CD4-positive, alpha-beta T cell (primary cell): ENCODE measurements at regions of chr14 and their contacts with region 1.

Region 1: DNA sequence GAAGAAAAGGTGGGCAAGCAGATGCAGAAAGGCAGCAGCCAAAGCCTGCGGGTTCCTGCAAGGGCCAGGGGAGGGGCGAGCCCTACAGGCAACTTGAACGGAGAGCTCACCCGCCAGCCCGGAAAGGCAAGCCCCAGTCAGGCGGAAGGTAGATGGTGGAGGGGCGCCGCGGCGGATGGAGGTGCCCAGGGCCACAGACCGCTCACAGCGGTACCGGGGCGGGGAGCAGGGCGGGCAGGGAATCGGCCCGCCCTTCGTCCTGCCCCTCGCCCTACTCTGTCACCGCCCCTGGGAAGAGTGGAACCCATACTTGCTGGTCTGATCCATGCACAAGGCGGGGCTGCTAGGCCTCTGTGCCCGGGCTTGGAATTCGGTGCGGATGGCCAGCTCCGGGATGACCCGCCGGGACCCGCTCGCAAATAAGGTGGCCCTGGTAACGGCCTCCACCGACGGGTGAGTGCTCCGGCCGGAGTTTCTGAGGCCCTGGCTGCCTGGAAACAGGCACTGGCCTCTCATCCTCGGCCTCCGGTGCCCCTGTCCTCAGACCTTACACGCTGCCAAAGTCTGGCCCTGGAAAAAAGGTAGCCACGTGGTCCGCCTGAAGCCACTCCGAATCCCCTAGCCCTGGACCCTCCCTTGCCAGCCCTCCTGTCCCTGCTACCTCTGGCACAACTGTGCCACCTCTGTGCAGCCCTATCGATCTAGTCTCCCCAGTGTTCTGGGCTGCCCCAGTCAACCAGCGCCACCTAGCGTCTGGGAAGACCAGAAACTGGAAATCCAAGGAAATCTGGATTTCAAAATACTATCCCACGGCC is at the start of gene DHRS4:
- DNase-seq: peak; percentile 67 to 92 (median 78)
- ATAC-seq: peak; percentile 91
- H3K4me3 ChIP-seq: peak within 1 kb of the TSS; percentile 84
- H3K4me3 Mint-ChIP-seq: peak within 1 kb of the TSS; percentile 96
- H3K27ac ChIP-seq: peak within 1 kb of the TSS; percentile 54 to 63
- H3K27ac Mint-ChIP-seq: peak within 1 kb of the TSS; percentile 79
- H3K4me1 ChIP-seq: peaks cover 25% of the 10 kb centered on the region
- H3K4me1 Mint-ChIP-seq: peaks cover 32% of the 10 kb centered on the region
- H3K27me3 ChIP-seq: no peaks in the 10 kb centered on the region
- H3K27me3 Mint-ChIP-seq: no peaks in the 10 kb centered on the region
- CTCF ChIP-seq: peak; percentile 93
- total RNA-seq, gene DHRS4: 6.6 to 6.7 TPM

Region 2: GRCh38 chr14:23665375-23666192 is 288.1 kb before region 1 on chr14:
- CTCF ChIA-PET with region 1: no interaction called
- POLR2A ChIA-PET with region 1: no interaction called
- intact Hi-C with region 1: loop called in 1 of 2 experiments (anchors 10 kb)
- DNase-seq: peak in 5 of 14 experiments; percentile 1 to 43 (median 33)
- ATAC-seq: no peak
- H3K4me3 ChIP-seq: no peak overlapping the region
- H3K4me3 Mint-ChIP-seq: no peak overlapping the region
- H3K27ac ChIP-seq: no peak overlapping the region
- H3K27ac Mint-ChIP-seq: no peak overlapping the region
- H3K4me1 ChIP-seq: peaks cover 6% of the 10 kb centered on the region
- H3K4me1 Mint-ChIP-seq: no peaks in the 10 kb centered on the region
- H3K27me3 ChIP-seq: no peaks in the 10 kb centered on the region
- H3K27me3 Mint-ChIP-seq: peaks cover 5% of the 10 kb centered on the region
- CTCF ChIP-seq: peak; percentile 33

Region 3: GRCh38 chr14:24013654-24014514 is 60.2 kb after region 1 on chr14:
- CTCF ChIA-PET with region 1: no interaction called
- POLR2A ChIA-PET with region 1: no interaction called
- intact Hi-C with region 1: loop called in 1 of 2 experiments (anchors 10 kb)
- DNase-seq: peak in 12 of 14 experiments; percentile 9 to 85 (median 32)
- ATAC-seq: peak; percentile 98
- H3K4me3 ChIP-seq: no peak overlapping the region
- H3K4me3 Mint-ChIP-seq: no peak overlapping the region
- H3K27ac ChIP-seq: no peak overlapping the region
- H3K27ac Mint-ChIP-seq: no peak overlapping the region
- H3K4me1 ChIP-seq: peaks cover 11% of the 10 kb centered on the region
- H3K4me1 Mint-ChIP-seq: peaks cover 25% of the 10 kb centered on the region
- H3K27me3 ChIP-seq: no peaks in the 10 kb centered on the region
- H3K27me3 Mint-ChIP-seq: no peaks in the 10 kb centered on the region
- CTCF ChIP-seq: peak; percentile 92